Aorta (tissue), 5 donors: ENCODE measurements at regions of chr6 and their contacts with region 1.

Region 1: DNA sequence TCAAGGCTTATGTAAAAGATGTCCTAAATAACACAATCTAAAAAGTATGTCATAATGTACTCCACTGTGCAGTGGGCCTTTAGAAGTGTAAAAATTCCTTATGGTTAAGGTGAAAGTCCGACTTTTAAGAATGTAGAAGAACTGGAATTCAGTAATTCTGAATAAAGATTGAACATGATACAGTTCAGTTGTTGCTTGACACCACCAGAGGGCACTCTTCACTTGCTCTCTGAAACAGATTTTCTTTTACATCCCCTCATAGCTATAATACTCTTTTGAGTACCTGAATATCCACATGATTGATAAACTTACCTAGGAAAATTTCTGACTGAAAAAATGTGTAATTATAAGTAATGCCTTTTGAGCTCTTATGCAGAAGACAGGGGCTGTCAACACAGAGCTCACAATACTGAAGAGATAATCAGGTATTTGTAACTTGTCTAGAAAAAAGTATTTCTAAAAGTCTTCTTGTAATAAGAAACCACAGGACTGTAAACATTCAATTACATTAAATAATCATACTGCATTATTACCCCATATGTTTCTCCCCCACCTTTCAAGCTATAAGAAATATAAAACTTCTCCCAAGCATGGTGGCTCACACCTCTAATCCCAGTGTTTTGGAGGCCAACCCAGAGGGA is 92.1 kb downstream of the POPDC3 start:
- DNase-seq: no peak
- ATAC-seq: no peak
- H3K4me3 ChIP-seq: no peak overlapping the region
- H3K27ac ChIP-seq: no peak overlapping the region
- H3K4me1 ChIP-seq: no peaks in the 10 kb centered on the region
- H3K27me3 ChIP-seq: no peaks in the 10 kb centered on the region

Region 2: DNA sequence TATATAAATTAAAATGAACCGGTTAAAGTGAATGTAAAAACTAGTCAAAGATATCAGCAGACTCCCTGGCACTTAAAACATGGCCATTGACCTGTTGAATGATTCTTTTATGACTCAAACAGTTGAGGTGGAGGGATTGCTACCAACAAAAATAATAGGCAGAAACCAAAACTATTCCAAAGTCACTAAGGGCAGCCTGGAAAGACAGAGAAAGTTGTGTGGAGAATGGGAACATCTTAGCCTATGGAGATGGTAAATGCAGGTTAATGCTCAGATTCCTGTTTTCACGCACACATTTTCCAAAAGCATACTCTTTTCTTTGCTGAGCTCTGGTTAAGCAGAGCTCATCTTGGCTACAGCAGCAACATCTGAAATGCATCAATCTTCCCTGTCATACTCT is 781.5 kb before region 1 on chr6:
- intact Hi-C with region 1: no loop called
- DNase-seq: no peak
- ATAC-seq: no peak
- H3K4me3 ChIP-seq: no peak overlapping the region
- H3K27ac ChIP-seq: no peak overlapping the region
- H3K4me1 ChIP-seq: no peaks in the 10 kb centered on the region
- H3K27me3 ChIP-seq: no peaks in the 10 kb centered on the region

Region 3: GRCh38 chr6:105402939-105403935 is 315.5 kb after region 1 on chr6 and contains the start of gene PREP:
- intact Hi-C with region 1: loop called in 1 of 2 experiments (anchors 5 kb)
- DNase-seq: peak; percentile 93 to 94
- ATAC-seq: peak; percentile 97
- H3K4me3 ChIP-seq: peak within 1 kb of the TSS; percentile 62 to 96
- H3K27ac ChIP-seq: peak within 1 kb of the TSS in 1 of 2 donors; percentile 49
- H3K4me1 ChIP-seq: no peaks in the 10 kb centered on the region
- H3K27me3 ChIP-seq: no peaks in the 10 kb centered on the region
- total RNA-seq, gene PREP: 20.4 to 21.8 TPM

Region 4: DNA sequence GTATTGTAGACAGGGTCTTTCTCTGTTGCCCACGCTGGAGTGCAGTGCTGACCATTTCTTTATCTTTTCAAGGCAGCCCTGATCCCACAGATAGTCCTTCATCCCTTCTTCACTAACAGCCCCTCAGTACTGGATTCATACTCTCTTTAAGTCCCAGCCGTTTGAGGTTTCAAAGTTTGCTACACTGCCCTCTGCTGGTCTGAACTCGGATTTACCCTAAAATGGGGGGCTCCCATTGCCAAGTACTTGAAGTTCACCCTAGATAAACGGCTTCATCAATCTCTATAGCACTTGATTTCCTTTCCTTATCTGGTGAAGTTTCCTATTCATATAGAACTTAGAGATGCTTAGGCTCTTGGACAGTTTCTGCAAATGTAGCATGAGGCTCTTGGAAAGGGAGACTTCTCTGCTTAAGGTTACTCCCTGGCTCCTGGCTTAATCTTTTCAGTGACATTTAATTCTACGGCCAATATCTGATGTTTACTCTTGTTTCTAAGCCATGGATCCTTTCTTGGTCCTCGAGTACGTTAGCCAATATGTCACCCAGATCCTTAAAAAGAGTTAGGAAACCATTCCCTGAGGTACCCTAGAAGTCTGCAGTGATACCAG is 336.6 kb after region 1 on chr6:
- intact Hi-C with region 1: loop called (anchors 5 kb)
- DNase-seq: no peak
- ATAC-seq: peak; percentile 83
- H3K4me3 ChIP-seq: no peak overlapping the region
- H3K27ac ChIP-seq: no peak overlapping the region
- H3K4me1 ChIP-seq: no peaks in the 10 kb centered on the region
- H3K27me3 ChIP-seq: no peaks in the 10 kb centered on the region